Common myeloid progenitor, CD34-positive (primary cell): ENCODE measurements at regions of chr3 and their contacts with region 1.

Region 1: GRCh38 chr3:32302601-32303398 is 64.3 kb downstream of the CMTM8 start:
- DNase-seq: no peak
- H3K4me3 ChIP-seq: peak overlapping the region in 2 of 7 experiments; percentile 12 to 50
- H3K27ac ChIP-seq: peak overlapping the region in 1 of 2 experiments; percentile 39
- H3K4me1 ChIP-seq: peaks cover 0 to 21% (median 9%) of the 10 kb centered on the region in 4 experiments
- H3K27me3 ChIP-seq: no peaks in the 10 kb centered on the region

Region 2: DNA sequence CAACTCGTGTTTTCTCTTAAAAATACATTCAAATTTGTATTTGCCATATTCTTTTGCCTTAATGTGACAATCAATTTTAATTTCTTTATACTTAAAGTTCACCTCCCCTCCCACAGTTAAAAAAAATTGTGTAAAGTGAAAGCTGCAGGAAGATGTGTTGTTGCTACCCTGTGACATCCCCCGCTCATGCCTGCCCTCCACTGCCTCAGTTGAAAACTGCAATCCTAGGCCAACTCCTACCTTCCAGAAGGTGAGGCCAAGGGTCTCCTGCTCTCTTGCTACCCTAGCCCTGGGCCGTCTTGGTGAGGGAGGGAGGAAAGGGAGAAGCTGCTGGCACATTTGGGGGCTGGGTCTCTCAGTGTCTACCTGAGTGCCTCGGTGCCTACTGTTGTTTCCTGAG is 31.9 kb after region 1 on chr3:
- CTCF ChIA-PET with region 1: interaction called, 76 read pairs
- POLR2A ChIA-PET with region 1: no interaction called
- DNase-seq: peak; percentile 46 to 60 (median 56)
- H3K4me3 ChIP-seq: no peak overlapping the region
- H3K27ac ChIP-seq: no peak overlapping the region
- H3K4me1 ChIP-seq: no peaks in the 10 kb centered on the region
- H3K27me3 ChIP-seq: no peaks in the 10 kb centered on the region